WTC11 (cell line): ENCODE measurements at regions of chr10 and their contacts with region 1.

Region 1: GRCh38 chr10:104291439-104291951 is 22.5 kb downstream of the GSTO2 start:
- DNase-seq: peak; percentile 90
- ATAC-seq: peak; percentile 99
- H3K4me3 Mint-ChIP-seq: peak overlapping the region; percentile 40
- H3K27ac Mint-ChIP-seq: no peak overlapping the region
- H3K4me1 Mint-ChIP-seq: peaks cover 23% of the 10 kb centered on the region
- H3K27me3 Mint-ChIP-seq: peaks cover 7% of the 10 kb centered on the region
- CTCF ChIP-seq: peak; percentile 99

Region 2: GRCh38 chr10:104268716-104269645 is 22.5 kb before region 1 on chr10 and contains the start of gene GSTO2:
- CTCF ChIA-PET with region 1: interaction called, 126 read pairs
- POLR2A ChIA-PET with region 1: no interaction called
- DNase-seq: peak; percentile 99
- ATAC-seq: peak; percentile 99
- H3K4me3 Mint-ChIP-seq: peak within 1 kb of the TSS; percentile 96
- H3K27ac Mint-ChIP-seq: peak within 1 kb of the TSS; percentile 94
- H3K4me1 Mint-ChIP-seq: peaks cover 11% of the 10 kb centered on the region
- H3K27me3 Mint-ChIP-seq: no peaks in the 10 kb centered on the region
- CTCF ChIP-seq: no peak
- total RNA-seq, gene GSTO2: 10.7 to 18.7 TPM (median 17.6 TPM) in 3 replicates

Region 3: DNA sequence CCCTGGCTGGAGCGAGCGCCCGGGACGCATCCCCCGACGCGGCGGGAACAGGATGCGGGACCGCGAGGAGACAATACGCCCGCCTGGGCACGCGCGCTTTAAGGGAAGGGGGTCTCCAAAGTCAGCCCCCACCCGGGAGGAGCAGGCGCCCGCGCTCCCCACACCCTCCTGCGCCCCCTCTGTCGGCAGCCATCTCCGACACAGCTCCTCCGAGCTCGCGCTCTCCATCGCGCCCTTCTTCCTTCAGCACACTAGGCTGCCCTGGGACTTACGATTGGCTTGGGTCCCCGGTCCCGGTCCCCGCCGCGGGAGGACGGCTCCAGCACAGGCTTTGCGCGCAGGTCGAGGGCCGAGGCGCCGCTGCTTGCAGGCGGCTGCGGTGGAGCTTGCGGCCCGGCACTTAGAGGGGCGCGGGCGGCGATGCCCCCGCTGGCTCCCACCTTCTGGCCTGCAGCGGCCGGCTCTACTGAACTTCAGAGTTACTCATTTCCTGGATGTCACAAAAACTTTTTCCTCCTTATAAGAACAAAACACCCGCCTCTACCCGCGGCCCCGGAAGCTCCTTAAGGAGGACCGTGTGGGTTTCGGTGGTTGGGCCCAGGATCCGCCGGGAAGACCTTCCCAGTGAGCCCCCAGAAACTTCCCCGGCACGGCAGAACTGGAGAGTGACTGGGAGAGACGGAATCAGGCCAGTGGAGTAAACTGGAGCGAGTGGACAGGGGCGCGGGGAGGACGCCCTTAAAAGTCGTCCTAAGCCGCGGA is 46.7 kb after region 1 on chr10 and contains the start of gene ITPRIP:
- CTCF ChIA-PET with region 1: interaction called, 19 read pairs
- POLR2A ChIA-PET with region 1: no interaction called
- DNase-seq: peak; percentile 68
- ATAC-seq: peak; percentile 63
- H3K4me3 Mint-ChIP-seq: peak within 1 kb of the TSS; percentile 93
- H3K27ac Mint-ChIP-seq: peak within 1 kb of the TSS; percentile 99
- H3K4me1 Mint-ChIP-seq: peaks cover 60% of the 10 kb centered on the region
- H3K27me3 Mint-ChIP-seq: no peaks in the 10 kb centered on the region
- CTCF ChIP-seq: no peak
- total RNA-seq, gene ITPRIP: 13.0 to 16.8 TPM (median 13.4 TPM) in 3 replicates